Psoas muscle (tissue), 8 donors: ENCODE measurements at regions of chr1 and their contacts with region 1.

Region 1: DNA sequence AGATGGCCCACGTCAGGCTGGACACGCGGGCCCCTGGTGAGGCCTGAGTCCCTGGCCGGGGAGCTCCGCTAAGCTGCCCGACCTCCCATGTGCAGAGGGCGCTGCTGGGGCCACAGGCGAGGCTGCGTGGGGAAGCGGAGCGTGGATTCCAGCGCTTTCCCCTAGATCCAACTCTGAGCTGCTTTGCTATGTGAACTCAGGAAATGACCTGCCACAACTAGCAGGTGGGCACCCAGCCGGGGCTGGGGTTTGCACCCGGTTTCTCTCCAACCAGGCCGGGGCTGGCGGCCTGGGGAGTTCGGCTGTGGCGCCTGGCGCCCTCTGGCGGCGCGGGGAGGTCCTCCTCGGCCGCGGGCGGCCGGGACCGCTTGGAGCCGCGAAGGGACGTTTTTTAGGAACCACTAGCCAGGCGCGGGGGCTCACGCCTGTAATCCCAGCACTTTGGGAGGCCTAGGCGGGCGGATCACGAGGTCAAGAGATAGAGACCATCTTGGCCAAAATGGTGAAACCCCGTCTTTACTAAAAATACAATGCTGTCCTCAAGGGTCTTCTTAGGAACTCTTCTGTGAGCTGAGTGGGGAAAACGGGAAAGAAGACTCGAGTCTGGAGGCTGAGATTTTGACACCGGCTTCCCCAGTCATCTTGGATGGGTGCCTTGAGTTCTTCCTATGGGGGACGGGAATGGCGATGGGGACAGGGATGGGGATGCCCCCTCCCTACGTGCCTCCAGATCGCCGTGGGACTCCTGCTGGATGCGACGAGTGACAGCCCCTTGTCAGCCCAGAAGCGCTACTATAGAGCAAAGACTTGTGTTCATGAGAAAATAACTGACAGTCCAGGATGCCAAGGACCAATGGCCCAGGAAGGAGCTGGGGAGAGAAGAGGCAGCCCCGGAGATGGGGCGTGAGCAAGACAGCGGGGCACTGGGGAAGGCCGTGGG is 12.6 kb downstream of the PYCR2 start:
- DNase-seq: peak; percentile 70 to 84
- ATAC-seq: peak; percentile 85 to 96 (median 88)
- H3K4me3 ChIP-seq: peak overlapping the region; percentile 31
- H3K27ac ChIP-seq: no peak overlapping the region
- H3K4me1 ChIP-seq: no peaks in the 10 kb centered on the region
- H3K27me3 ChIP-seq: no peaks in the 10 kb centered on the region
- CTCF ChIP-seq: peak; percentile 88

Region 2: GRCh38 chr1:225772323-225772768 is 139.1 kb before region 1 on chr1:
- intact Hi-C with region 1: loop called in 1 of 2 experiments (anchors 5 kb)
- DNase-seq: peak; percentile 80 to 89
- ATAC-seq: peak; percentile 90 to 93 (median 90)
- H3K4me3 ChIP-seq: no peak overlapping the region
- H3K27ac ChIP-seq: peak overlapping the region; percentile 5
- H3K4me1 ChIP-seq: peaks cover 31% of the 10 kb centered on the region
- H3K27me3 ChIP-seq: no peaks in the 10 kb centered on the region
- CTCF ChIP-seq: peak; percentile 87

Region 3: DNA sequence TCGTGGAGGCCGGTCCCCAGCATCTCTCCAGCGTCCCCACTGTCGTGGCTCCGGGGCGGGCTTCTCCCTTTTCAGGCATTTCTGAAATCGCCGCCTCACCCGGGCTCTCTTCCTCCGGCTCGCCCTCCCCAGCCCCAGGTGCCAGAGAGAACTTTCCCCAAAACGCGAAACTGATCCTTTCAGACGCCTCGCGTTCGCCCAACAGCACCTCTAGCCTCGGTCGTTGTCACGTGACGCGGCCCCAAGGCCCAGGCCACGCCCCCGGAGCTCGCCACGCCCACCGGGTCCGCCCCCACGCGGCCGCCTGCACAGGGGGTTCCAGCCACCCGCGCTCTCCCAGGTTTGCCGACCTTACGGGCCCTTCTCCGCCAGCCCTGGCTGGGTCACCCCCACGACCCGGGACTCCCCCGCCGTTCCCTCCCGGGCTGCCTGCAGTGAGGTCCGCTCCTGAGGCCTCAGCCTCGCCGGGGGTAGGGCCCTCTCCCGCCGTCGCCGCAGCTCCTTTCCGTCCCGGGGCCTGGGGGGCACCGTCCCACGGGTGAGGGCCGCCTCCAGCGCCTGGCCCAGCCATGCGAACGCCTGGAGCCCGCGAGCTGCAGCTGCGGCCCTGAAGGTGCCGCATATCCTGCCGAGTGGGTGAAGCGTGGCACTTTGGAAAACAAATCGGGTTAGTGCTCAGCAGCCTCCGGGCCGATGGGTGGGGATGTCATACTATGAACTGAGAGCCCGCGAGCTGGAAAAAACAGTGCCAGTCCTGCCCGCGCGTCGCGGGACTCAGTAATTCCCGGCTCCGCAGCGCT is 172.0 kb after region 1 on chr1:
- intact Hi-C with region 1: no loop called
- DNase-seq: peak; percentile 88 to 94
- ATAC-seq: peak; percentile 96 to 99 (median 97)
- H3K4me3 ChIP-seq: peak overlapping the region; percentile 95
- H3K27ac ChIP-seq: peak overlapping the region; percentile 73
- H3K4me1 ChIP-seq: peaks cover 4% of the 10 kb centered on the region
- H3K27me3 ChIP-seq: no peaks in the 10 kb centered on the region
- CTCF ChIP-seq: no peak

Region 4: DNA sequence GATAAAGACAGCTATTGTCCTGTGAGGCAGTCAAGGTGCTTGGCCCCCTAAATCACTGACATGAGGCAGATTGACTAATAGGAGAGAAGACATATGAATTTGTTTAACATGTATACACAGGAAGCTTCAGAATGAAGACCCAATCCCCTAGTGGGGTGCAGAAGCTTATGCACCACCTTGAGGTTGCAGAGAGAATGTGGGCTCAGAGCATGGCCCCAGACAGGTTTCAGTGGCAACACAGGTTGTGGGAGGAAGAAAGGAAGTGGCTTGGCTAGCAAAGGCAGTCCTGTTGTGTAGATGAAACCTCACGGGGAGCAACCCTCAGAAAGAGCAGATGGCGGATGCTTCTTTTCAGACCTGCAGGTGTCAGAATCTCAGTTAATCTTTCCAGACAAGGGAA is 533.4 kb after region 1 on chr1:
- intact Hi-C with region 1: no loop called
- DNase-seq: no peak
- ATAC-seq: no peak
- H3K4me3 ChIP-seq: no peak overlapping the region
- H3K27ac ChIP-seq: no peak overlapping the region
- H3K4me1 ChIP-seq: no peaks in the 10 kb centered on the region
- H3K27me3 ChIP-seq: no peaks in the 10 kb centered on the region
- CTCF ChIP-seq: no peak